Stomach (tissue), 19 donors: ENCODE measurements at regions of chr17 and their contacts with region 1.

Region 1: GRCh38 chr17:81959362-81960129 is 1.4 kb downstream of the NOTUM start:
- DNase-seq: peak; percentile 84 to 88
- H3K4me3 ChIP-seq: peak overlapping the region; percentile 44 to 62 (median 48)
- H3K27ac ChIP-seq: no peak overlapping the region
- H3K4me1 ChIP-seq: peaks cover 20 to 28% (median 26%) of the 10 kb centered on the region in 4 donors
- H3K27me3 ChIP-seq: peaks cover 19 to 97% (median 53%) of the 10 kb centered on the region in 3 donors
- CTCF ChIP-seq: peak in 4 of 7 experiments; percentile 11 to 91 (median 68)
- EP300 ChIP-seq: no peak
- POLR2A ChIP-seq: no peak

Region 2: GRCh38 chr17:81808778-81809555 is 150.6 kb before region 1 on chr17:
- intact Hi-C with region 1: no loop called
- DNase-seq: no peak
- H3K4me3 ChIP-seq: no peak overlapping the region
- H3K27ac ChIP-seq: no peak overlapping the region
- H3K4me1 ChIP-seq: peaks cover 13 to 24% (median 18%) of the 10 kb centered on the region in 4 donors
- H3K27me3 ChIP-seq: peaks cover 16 to 100% (median 77%) of the 10 kb centered on the region in 3 donors
- CTCF ChIP-seq: no peak
- EP300 ChIP-seq: no peak
- POLR2A ChIP-seq: no peak

Region 3: GRCh38 chr17:82019690-82020571 is 60.4 kb after region 1 on chr17:
- intact Hi-C with region 1: loop called (anchors 5 kb)
- DNase-seq: peak; percentile 63 to 73
- H3K4me3 ChIP-seq: no peak overlapping the region
- H3K27ac ChIP-seq: no peak overlapping the region
- H3K4me1 ChIP-seq: peaks cover 40 to 68% (median 62%) of the 10 kb centered on the region in 4 donors
- H3K27me3 ChIP-seq: no peaks in the 10 kb centered on the region
- CTCF ChIP-seq: peak in 4 of 7 experiments; percentile 7 to 67 (median 56)
- EP300 ChIP-seq: no peak
- POLR2A ChIP-seq: no peak